ENCODE measurements at regions of chr12 and their contacts with region 1.

Region 1: GRCh38 chr12:126069549-126070165 is 1004.4 kb downstream of the AACS start:
- DNase-seq: peak; percentile 79
- ATAC-seq: no peak
- H3K4me3 Mint-ChIP-seq: no peak overlapping the region
- H3K27ac Mint-ChIP-seq: no peak overlapping the region
- H3K4me1 Mint-ChIP-seq: no peaks in the 10 kb centered on the region
- H3K27me3 Mint-ChIP-seq: no peaks in the 10 kb centered on the region

Region 2: DNA sequence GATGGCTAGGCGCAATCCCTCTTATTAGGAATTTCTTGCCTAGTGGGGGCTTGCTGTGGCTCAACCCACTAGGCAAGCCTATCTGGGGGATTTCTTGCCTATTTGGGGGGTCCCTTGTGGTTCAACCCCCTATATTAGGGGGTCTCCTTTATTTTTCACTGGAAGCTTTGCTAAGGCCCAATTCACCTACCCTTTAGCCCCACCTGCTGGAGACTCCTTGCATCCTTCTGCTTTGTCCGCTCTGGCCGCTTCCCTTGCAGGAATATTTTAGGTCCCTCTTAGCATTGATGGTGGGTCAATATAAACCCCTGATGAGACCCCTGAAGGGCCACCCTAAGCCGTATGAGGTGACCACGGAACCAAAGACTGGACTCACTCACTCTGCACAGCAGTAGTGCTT is 547.7 kb after region 1 on chr12:
- CTCF ChIA-PET with region 1: interaction called, 3 read pairs
- POLR2A ChIA-PET with region 1: no interaction called
- intact Hi-C with region 1: loop called in 1 of 2 experiments (anchors 1 kb)
- DNase-seq: peak; percentile 35
- ATAC-seq: no peak
- H3K4me3 Mint-ChIP-seq: no peak overlapping the region
- H3K27ac Mint-ChIP-seq: no peak overlapping the region
- H3K4me1 Mint-ChIP-seq: no peaks in the 10 kb centered on the region
- H3K27me3 Mint-ChIP-seq: no peaks in the 10 kb centered on the region

Region 3: DNA sequence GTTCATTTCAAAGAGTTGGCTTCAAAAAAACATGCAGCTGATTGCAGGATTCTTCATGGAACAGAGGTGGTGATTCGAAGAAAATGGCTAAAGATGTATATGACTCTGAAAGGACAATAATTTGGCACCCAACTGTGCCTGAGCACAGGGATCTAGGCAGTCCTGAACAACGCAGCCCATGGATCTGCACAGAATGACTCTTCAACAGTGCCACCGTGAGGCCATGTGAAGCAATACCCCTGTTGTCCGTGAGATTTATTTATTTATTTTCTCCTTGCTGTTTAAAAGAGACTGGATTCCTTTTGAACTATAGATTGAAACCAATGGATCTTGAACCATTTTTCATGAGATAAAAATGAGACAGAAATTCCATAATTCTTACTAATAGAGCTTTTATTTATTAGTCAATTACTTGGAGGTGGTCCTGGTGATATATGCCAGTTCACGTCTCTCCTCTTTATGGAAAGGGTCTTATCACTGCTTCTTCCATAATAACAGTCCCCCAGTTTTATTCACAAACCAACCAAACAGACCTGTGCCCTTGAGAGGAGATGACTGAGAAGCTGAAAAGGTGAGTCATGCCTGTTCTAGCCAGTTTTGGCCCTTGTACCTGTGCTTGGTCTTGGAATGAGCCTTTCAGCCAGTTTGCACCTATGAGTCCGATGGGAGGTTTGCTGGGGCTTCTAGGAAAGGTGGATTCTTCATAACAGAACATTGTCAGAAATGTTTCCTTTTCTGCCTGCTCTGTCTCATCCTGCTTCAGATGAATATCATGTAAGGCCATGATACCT is 593.8 kb after region 1 on chr12:
- CTCF ChIA-PET with region 1: no interaction called
- POLR2A ChIA-PET with region 1: no interaction called
- intact Hi-C with region 1: loop called in 1 of 2 experiments (anchors 1 kb)
- DNase-seq: peak; percentile 56
- ATAC-seq: peak; percentile 39
- H3K4me3 Mint-ChIP-seq: no peak overlapping the region
- H3K27ac Mint-ChIP-seq: no peak overlapping the region
- H3K4me1 Mint-ChIP-seq: no peaks in the 10 kb centered on the region
- H3K27me3 Mint-ChIP-seq: peaks cover 4% of the 10 kb centered on the region

Region 4: DNA sequence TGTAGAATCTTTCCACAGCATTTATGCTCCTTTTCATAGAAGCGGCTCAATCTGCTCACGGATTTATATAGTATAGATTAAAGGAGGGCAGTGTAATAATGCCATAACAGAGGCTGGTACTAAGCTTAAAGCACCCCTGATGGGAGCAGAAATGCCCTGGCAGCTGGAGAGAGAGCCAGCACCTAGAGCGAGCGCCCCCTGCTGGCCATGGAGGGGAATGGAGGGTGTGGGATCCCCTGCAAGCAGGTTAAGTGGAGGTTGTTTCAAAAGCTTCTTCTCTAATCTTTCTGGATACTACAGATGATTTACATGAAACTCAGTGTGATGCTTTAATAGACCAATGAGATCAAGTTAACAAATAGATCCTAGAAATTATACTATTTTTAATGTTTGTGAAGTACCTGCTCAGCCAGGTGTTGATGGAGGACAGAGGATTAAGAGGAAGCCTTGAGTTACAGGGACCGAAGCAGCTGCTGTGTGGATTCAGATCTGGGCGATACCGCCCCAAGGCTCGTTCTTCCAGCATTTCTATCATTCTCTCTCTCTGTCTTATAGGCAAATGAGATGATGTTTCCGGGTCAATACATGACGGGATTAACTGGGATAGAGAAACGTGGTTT is 678.0 kb after region 1 on chr12:
- CTCF ChIA-PET with region 1: interaction called, 8 read pairs
- POLR2A ChIA-PET with region 1: no interaction called
- intact Hi-C with region 1: loop called in 1 of 2 experiments (anchors 1 kb)
- DNase-seq: peak; percentile 80
- ATAC-seq: peak; percentile 71
- H3K4me3 Mint-ChIP-seq: no peak overlapping the region
- H3K27ac Mint-ChIP-seq: no peak overlapping the region
- H3K4me1 Mint-ChIP-seq: no peaks in the 10 kb centered on the region
- H3K27me3 Mint-ChIP-seq: peaks cover 2% of the 10 kb centered on the region

Region 5: GRCh38 chr12:126874427-126875026 is 804.9 kb after region 1 on chr12:
- CTCF ChIA-PET with region 1: interaction called, 7 read pairs
- POLR2A ChIA-PET with region 1: no interaction called
- intact Hi-C with region 1: loop called (anchors 1 kb)
- DNase-seq: peak; percentile 83
- ATAC-seq: peak; percentile 64
- H3K4me3 Mint-ChIP-seq: no peak overlapping the region
- H3K27ac Mint-ChIP-seq: no peak overlapping the region
- H3K4me1 Mint-ChIP-seq: no peaks in the 10 kb centered on the region
- H3K27me3 Mint-ChIP-seq: peaks cover 4% of the 10 kb centered on the region

Region 6: DNA sequence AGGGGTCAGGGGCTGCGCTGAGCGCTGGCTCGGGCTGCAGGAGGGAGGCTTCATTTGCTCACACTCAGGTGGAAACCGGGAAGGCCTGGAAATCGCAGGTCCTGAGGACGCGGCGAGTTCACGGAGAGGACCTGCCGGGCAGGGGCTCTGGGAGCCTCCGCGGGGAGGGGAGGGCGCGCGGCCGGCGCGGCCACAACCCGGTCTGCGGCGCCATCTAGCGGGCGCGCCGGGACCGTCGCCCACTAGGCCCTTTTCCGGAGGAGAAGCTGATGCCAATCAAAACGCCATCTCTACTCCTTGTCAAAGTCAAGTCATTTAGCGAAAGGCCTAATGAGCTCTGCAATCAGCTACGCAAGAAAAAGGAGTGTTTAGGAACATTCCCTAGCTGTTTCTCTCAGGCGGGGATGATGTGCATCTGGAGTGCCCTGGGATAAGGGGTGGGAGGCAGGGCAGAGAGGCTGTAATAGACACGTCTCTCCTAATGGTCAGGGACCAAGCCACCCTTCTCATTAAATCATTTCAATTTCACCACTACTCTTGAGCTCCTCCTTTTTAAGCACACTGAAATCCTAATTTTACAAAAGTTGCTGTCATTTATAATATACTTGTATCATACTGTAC is 1311.5 kb after region 1 on chr12:
- CTCF ChIA-PET with region 1: no interaction called
- POLR2A ChIA-PET with region 1: no interaction called
- intact Hi-C with region 1: loop called in 1 of 2 experiments (anchors 2 kb)
- DNase-seq: peak; percentile 65
- ATAC-seq: peak; percentile 53
- H3K4me3 Mint-ChIP-seq: no peak overlapping the region
- H3K27ac Mint-ChIP-seq: no peak overlapping the region
- H3K4me1 Mint-ChIP-seq: no peaks in the 10 kb centered on the region
- H3K27me3 Mint-ChIP-seq: peaks cover 7% of the 10 kb centered on the region